ENCODE measurements at regions of chr5 and their contacts with region 1.

Region 1: DNA sequence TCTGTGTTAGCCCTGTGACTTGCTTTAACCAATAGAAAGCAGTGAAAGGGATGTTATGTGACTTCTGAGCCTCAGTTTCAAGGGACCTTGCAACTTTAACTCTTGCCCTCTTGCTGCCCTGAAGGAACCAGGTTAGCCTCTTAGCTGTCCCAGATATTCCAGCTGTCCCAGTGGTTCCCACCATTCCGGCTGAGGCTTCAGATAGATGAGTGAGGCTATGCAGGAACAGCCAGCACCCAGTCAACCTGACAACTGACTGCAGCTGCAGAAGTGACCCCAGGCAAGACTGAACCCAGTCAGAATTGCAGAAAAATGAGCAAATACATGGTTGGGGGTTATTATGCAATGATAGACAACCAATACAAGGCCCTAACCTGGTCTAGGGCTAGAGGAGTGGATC is 10.4 kb upstream of the CDC23 start:
- DNase-seq: no peak
- H3K4me3 Mint-ChIP-seq: no peak overlapping the region
- H3K27ac Mint-ChIP-seq: no peak overlapping the region
- H3K4me1 Mint-ChIP-seq: peaks cover 7% of the 10 kb centered on the region
- H3K27me3 Mint-ChIP-seq: no peaks in the 10 kb centered on the region
- CTCF ChIP-seq: no peak

Region 2: DNA sequence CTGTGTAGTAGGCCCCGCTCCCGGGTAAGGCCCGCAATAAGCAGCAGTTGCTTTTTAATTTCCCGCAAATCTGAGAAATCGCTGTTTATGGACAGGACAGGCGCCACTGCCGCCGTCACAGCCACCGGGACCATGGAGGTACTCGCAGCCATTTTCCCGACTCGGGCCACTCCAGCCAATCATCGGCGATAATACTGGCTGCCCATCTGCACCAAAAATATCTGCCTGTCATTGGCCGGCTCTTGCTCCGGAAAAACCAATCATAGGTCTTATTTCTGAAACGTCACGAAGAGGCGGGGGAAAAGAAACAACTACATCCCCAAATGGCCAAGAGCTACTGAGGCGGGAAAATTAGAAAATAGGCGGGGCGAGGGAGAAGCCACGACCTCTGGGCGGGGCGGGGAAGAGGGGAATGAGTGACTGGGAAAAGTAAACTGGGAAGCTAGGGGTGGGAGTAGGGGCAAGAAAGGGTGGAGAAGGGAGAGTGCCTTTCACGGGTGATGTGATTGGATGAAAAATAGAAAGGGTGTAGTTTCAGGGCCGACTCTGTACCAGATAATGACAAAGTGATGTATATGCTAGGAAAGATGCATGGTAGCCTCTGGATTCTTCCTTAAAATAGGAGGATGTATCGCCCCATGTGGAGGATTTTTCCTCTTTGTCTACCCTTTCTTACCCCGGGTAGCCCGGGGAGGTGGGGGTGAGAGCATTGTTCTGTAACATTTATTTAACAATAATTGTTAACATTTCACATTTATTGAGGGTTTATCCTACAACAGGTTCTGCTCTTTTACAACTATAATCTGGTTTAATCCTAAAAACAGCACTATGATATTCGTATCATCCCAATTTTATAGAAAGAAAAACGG is 10.1 kb before region 1 on chr5 and contains the start of gene CDC23:
- CTCF ChIA-PET with region 1: interaction called, 48 read pairs
- POLR2A ChIA-PET with region 1: interaction called, 22 read pairs
- intact Hi-C with region 1: no loop called
- DNase-seq: peak; percentile 100
- H3K4me3 Mint-ChIP-seq: peak within 1 kb of the TSS; percentile 98
- H3K27ac Mint-ChIP-seq: peak within 1 kb of the TSS; percentile 99
- H3K4me1 Mint-ChIP-seq: peaks cover 18% of the 10 kb centered on the region
- H3K27me3 Mint-ChIP-seq: no peaks in the 10 kb centered on the region
- CTCF ChIP-seq: no peak
- total RNA-seq, gene CDC23: 49.7 and 67.1 TPM in 2 replicates

Region 3: DNA sequence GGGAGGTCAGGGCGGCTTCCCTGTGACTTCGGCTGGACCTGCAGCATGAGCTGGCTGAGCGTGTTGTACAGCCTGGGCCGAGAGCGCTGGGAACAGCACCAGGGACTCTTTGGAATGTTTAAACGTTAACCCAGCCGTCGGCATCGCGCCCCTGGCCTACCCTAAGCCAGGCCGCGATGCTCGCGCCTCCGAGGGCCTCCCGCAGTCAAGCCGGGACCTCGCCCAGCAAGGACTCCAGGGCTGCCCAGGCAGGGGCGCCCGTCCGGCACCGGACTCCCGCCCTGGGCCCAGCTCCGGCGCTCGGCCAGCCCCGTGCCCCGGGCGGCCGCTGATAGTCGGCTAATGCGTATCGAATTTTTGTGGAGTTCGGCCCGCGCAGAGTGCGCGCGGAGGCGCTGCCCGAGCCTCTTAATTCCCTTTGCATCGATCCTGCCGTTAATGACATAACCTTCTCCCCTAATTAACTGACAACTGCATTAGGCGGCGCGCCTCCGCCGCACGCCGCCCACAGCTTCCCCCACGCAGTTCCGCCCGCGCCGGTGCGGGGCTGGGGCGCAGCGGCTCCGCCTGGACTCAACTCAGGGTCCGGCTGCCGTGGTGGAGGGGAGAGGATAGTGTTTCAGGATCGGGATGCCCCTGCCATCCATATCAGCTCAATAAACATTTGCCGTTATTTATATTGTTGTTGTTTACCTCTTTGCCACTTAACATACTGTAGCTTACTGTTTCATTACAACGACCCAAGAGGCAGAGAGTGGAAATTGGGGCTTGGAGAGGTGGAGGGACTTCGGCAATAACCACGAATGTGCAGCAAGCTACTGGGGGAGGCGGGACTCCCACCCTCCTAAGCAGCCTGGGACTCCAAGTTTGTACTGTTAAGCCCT is 18.4 kb after region 1 on chr5:
- CTCF ChIA-PET with region 1: interaction called, 113 read pairs
- POLR2A ChIA-PET with region 1: no interaction called
- intact Hi-C with region 1: no loop called
- DNase-seq: no peak
- H3K4me3 Mint-ChIP-seq: no peak overlapping the region
- H3K27ac Mint-ChIP-seq: no peak overlapping the region
- H3K4me1 Mint-ChIP-seq: no peaks in the 10 kb centered on the region
- H3K27me3 Mint-ChIP-seq: peaks cover 63% of the 10 kb centered on the region
- CTCF ChIP-seq: no peak

Region 4: GRCh38 chr5:138282920-138283742 is 59.6 kb after region 1 on chr5:
- CTCF ChIA-PET with region 1: interaction called, 72 read pairs
- POLR2A ChIA-PET with region 1: no interaction called
- intact Hi-C with region 1: loop called (anchors 1 kb)
- DNase-seq: peak; percentile 57
- H3K4me3 Mint-ChIP-seq: no peak overlapping the region
- H3K27ac Mint-ChIP-seq: no peak overlapping the region
- H3K4me1 Mint-ChIP-seq: no peaks in the 10 kb centered on the region
- H3K27me3 Mint-ChIP-seq: no peaks in the 10 kb centered on the region
- CTCF ChIP-seq: peak; percentile 56

Region 5: GRCh38 chr5:138305797-138306196 is 82.3 kb after region 1 on chr5:
- CTCF ChIA-PET with region 1: interaction called, 11 read pairs
- POLR2A ChIA-PET with region 1: no interaction called
- intact Hi-C with region 1: no loop called
- DNase-seq: peak; percentile 79
- H3K4me3 Mint-ChIP-seq: no peak overlapping the region
- H3K27ac Mint-ChIP-seq: peak overlapping the region; percentile 57
- H3K4me1 Mint-ChIP-seq: peaks cover 8% of the 10 kb centered on the region
- H3K27me3 Mint-ChIP-seq: no peaks in the 10 kb centered on the region
- CTCF ChIP-seq: no peak

Region 6: DNA sequence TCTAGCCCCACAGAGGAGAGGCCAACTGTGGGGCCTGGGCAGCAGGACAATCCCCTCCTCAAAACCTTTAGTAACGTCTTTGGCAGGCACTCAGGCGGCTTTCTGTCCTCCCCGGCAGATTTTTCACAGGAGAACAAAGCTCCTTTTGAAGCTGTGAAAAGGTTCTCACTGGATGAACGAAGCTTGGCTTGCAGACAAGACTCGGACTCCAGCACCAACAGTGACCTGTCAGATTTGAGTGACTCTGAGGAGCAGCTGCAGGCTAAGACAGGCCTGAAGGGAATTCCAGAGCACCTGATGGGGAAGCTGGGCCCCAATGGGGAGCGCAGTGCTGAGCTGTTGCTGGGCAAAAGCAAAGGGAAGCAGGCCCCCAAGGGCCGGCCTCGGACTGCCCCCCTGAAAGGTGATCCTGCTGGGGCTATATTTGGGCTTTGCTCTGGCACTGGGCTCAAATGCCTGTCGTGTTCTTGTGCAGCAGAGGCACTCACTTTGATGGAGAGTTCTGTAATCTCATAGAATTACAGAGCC is 168.4 kb after region 1 on chr5:
- CTCF ChIA-PET with region 1: interaction called, 10 read pairs
- POLR2A ChIA-PET with region 1: no interaction called
- intact Hi-C with region 1: no loop called
- DNase-seq: no peak
- H3K4me3 Mint-ChIP-seq: no peak overlapping the region
- H3K27ac Mint-ChIP-seq: no peak overlapping the region
- H3K4me1 Mint-ChIP-seq: peaks cover 11% of the 10 kb centered on the region
- H3K27me3 Mint-ChIP-seq: no peaks in the 10 kb centered on the region
- CTCF ChIP-seq: no peak

Region 7: DNA sequence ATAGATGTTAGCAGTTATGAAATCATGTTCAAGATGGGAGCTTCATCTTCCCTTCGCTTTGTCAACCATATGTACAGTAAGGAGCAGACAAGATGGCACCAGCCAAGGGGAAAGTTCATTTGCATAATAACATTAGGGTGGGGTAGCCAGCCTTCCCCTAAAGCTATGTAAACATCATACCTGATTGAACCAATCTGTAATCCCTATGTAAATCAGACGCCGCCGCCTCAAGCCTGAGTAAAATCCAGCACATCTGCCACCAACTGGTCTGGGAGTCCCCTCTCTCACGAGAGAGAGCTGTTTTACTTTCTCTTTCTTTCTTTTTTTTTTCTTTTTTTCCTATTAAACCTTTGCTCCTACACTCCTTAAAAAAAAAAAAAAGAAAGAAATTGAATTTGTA is 184.5 kb after region 1 on chr5:
- CTCF ChIA-PET with region 1: interaction called, 104 read pairs
- POLR2A ChIA-PET with region 1: no interaction called
- intact Hi-C with region 1: loop called (anchors 1 kb)
- DNase-seq: no peak
- H3K4me3 Mint-ChIP-seq: no peak overlapping the region
- H3K27ac Mint-ChIP-seq: no peak overlapping the region
- H3K4me1 Mint-ChIP-seq: peaks cover 5% of the 10 kb centered on the region
- H3K27me3 Mint-ChIP-seq: no peaks in the 10 kb centered on the region
- CTCF ChIP-seq: no peak

Region 8: DNA sequence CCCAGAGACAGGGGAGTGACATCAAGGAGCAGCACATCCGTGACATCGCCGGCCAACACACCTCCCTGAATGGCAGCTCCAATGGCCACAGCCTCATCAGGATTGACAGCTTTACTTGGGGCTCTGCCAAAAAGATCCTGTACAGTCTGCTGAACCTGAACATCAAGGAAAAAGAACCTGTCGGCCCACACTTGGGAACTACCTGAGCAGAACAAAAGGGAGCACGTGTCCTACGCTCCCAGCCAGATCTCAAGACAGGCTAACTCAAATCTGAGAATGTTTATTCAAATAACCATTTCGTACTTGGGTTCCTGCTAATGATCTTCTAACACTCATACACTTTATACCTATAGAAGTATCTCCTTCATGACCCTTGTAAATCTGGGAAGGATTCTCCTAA is 336.4 kb after region 1 on chr5:
- CTCF ChIA-PET with region 1: no interaction called
- POLR2A ChIA-PET with region 1: no interaction called
- intact Hi-C with region 1: no loop called
- DNase-seq: no peak
- H3K4me3 Mint-ChIP-seq: no peak overlapping the region
- H3K27ac Mint-ChIP-seq: no peak overlapping the region
- H3K4me1 Mint-ChIP-seq: peaks cover 7% of the 10 kb centered on the region
- H3K27me3 Mint-ChIP-seq: no peaks in the 10 kb centered on the region
- CTCF ChIP-seq: no peak